ENCODE measurements at regions of chr19 and their contacts with region 1.

Region 1: GRCh38 chr19:56066152-56067023 is 54.7 kb downstream of the ZNF787 start:
- DNase-seq: peak; percentile 69 to 84 (median 82)
- ATAC-seq: peak; percentile 71 to 88
- H3K4me3 ChIP-seq: no peak overlapping the region
- H3K27ac ChIP-seq: no peak overlapping the region
- H3K4me1 ChIP-seq: no peaks in the 10 kb centered on the region
- H3K27me3 ChIP-seq: no peaks in the 10 kb centered on the region

Region 2: GRCh38 chr19:56140583-56141416 is 74.4 kb after region 1 on chr19 and contains the start of gene ZNF444:
- intact Hi-C with region 1: no loop called
- DNase-seq: peak; percentile 98 to 99 (median 99)
- ATAC-seq: peak; percentile 95
- H3K4me3 ChIP-seq: peak within 1 kb of the TSS; percentile 56
- H3K27ac ChIP-seq: peak within 1 kb of the TSS; percentile 59
- H3K4me1 ChIP-seq: peaks cover 3% of the 10 kb centered on the region
- H3K27me3 ChIP-seq: no peaks in the 10 kb centered on the region
- total RNA-seq, gene ZNF444: 19.3 to 29.3 (median 23.1) TPM

Region 3: DNA sequence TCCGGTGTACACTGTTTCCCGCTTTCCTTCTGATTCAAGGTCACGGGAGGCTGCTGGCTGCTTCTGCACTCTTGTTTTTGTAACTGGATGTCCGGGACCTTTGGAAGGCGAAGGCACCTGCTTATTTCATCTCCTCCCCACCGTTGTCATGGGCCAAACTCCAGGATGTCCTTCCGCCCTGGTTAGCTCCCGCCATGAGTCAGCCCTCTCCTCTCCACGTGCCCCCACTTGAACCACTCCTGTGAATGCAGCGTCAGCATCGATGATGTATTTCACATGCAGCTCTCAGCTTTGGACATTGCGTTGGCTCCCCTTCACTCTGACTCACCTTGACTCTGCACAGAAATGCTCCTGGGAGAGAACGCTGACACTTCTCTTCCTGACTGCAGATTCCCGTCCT is 103.9 kb after region 1 on chr19:
- intact Hi-C with region 1: loop called in 1 of 4 experiments (anchors 5 kb)
- DNase-seq: no peak
- ATAC-seq: peak in 1 of 2 donors; percentile 39
- H3K4me3 ChIP-seq: no peak overlapping the region
- H3K27ac ChIP-seq: no peak overlapping the region
- H3K4me1 ChIP-seq: no peaks in the 10 kb centered on the region
- H3K27me3 ChIP-seq: no peaks in the 10 kb centered on the region